Activated CD8-positive, alpha-beta T cell treated with anti-CD3 and anti-CD28 coated beads for 36 hours (primary cell): ENCODE measurements at regions of chr17 and their contacts with region 1.

Region 1: GRCh38 chr17:47889734-47890529 is 6.1 kb upstream of the SP2 start:
- DNase-seq: peak; percentile 96
- ATAC-seq: peak; percentile 98
- H3K4me3 Mint-ChIP-seq: no peak overlapping the region
- H3K27ac Mint-ChIP-seq: no peak overlapping the region
- H3K4me1 Mint-ChIP-seq: peaks cover 30% of the 10 kb centered on the region
- H3K27me3 Mint-ChIP-seq: no peaks in the 10 kb centered on the region
- CTCF ChIP-seq: peak; percentile 95

Region 2: DNA sequence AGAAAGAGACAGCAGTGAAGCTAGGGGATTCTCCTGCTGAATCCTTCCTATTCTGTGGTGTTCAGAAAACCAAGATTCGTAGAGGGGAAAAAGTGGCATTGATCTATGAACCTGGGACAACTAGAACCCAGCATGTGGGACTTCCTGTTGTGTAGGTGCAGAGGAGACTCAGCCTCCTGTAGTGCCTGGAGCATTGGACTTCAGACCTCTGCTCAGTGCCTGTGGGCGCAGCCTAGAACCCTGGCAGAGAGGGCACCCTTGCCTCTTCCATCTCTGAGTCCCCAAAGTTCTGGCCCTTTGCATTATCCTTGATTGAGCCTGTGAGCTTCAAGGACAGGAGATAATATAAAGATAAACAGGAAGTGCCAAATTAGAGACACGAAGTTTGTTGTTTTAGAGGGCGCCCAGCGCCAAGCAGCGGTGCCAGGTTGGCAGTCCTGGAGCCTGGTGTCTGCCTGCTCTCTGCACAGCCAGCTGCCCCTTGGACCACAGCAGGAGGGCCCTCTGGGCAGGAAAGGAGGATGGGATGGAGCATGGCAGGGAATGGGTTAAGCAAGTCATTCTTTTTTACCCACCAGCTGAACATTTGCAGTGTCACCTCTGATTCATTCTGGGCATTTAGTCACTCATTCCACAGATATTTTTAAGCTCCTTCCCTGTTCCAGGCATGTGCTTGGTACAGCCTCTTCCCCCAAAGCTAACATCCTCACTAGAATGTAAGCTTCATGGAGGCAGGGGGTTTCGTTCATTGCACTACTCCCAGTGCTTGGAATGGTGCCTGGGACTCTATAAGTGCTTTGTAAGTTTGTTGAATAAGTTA is 27.1 kb before region 1 on chr17:
- CTCF ChIA-PET with region 1: interaction called, 10 read pairs
- POLR2A ChIA-PET with region 1: interaction called, 4 read pairs
- intact Hi-C with region 1: no loop called
- DNase-seq: no peak
- ATAC-seq: no peak
- H3K4me3 Mint-ChIP-seq: no peak overlapping the region
- H3K27ac Mint-ChIP-seq: no peak overlapping the region
- H3K4me1 Mint-ChIP-seq: peaks cover 12% of the 10 kb centered on the region
- H3K27me3 Mint-ChIP-seq: peaks cover 13% of the 10 kb centered on the region
- CTCF ChIP-seq: no peak

Region 3: DNA sequence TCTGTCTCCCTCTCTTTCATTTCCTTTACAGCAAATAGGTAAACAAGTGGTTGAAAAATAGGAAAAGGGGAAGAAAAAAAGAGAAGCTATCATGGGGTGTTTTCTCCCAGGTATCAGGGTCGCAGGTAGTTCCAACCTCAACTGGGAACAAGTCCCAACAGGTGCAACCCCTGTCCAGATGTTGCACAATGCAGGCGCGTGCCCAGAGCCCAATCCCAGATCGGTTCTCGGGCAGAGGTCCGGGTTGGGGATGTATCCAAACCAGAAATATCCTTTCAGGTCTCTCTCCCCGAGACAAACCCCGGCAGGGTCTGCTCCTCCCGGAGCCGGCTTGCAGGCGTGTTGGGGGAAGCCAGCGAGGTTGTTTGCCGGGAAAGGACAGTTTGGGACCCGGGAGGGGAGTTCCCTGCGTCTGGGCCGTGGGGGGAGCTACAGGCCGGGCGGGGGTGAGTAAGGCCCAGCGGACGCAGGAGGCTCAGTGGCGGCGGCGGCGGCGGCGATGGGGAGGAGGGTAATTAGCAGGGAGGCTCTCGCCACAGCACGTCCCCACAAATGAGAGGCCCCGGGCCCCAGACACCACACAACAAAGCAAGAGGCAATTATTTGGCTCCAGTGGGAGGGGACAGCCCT is 17.8 kb before region 1 on chr17:
- CTCF ChIA-PET with region 1: interaction called, 18 read pairs
- POLR2A ChIA-PET with region 1: interaction called, 4 read pairs
- intact Hi-C with region 1: no loop called
- DNase-seq: no peak
- ATAC-seq: no peak
- H3K4me3 Mint-ChIP-seq: no peak overlapping the region
- H3K27ac Mint-ChIP-seq: no peak overlapping the region
- H3K4me1 Mint-ChIP-seq: no peaks in the 10 kb centered on the region
- H3K27me3 Mint-ChIP-seq: peaks cover 37% of the 10 kb centered on the region
- CTCF ChIP-seq: no peak

Region 4: GRCh38 chr17:47879028-47879585 is 10.8 kb before region 1 on chr17:
- CTCF ChIA-PET with region 1: interaction called, 10 read pairs
- POLR2A ChIA-PET with region 1: interaction called, 4 read pairs
- intact Hi-C with region 1: no loop called
- DNase-seq: peak; percentile 17
- ATAC-seq: peak; percentile 65
- H3K4me3 Mint-ChIP-seq: no peak overlapping the region
- H3K27ac Mint-ChIP-seq: no peak overlapping the region
- H3K4me1 Mint-ChIP-seq: peaks cover 12% of the 10 kb centered on the region
- H3K27me3 Mint-ChIP-seq: peaks cover 17% of the 10 kb centered on the region
- CTCF ChIP-seq: no peak